HepG2 (cell line): ENCODE measurements at regions of chr22 and their contacts with region 1.

Region 1: DNA sequence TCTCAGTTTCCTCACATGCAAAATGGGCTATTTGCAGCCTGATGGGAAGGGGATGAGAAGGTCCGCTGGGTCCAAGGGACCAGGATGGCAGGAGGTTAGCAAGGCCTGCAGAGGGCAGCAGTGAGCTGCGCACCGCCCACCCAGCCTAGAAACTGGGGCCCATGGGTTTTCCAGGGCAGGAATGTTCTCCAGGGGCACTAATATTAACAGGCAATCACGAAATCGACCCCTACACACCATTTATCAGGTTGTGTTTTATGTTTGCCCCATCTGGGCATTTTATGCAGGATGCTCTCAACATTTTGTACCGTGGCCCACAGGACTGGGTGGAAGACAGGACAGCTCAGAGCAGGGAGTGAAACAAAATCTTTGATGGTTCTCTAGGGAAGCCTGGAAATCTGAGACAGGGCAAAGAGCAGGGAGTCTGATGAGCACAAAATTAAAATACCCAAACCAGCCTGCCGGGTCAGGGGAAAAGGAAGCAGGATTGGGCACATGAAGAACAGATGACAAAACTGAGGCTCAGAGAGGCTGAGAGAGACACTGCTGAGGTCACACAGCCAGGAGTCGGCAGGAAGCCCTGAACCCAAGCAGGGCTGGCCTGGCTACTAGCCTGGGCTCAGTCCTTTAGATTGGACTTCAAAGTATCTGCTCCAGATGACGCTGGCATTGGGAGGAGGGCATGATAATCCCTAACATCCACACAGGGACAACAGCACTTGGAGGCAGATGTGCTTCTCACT is 1.6 kb upstream of the BCR start:
- DNase-seq: no peak
- ATAC-seq: peak; percentile 51
- H3K4me3 ChIP-seq: peak overlapping the region in 1 of 3 experiments; percentile 83; a peak in 2 of 6 replicates
- H3K27ac ChIP-seq: peak overlapping the region; percentile 60
- H3K4me1 ChIP-seq: peaks cover 65% of the 10 kb centered on the region
- H3K27me3 ChIP-seq: no peaks in the 10 kb centered on the region; a peak in 1 of 5 replicates
- CTCF ChIP-seq: peak; percentile 97
- EP300 ChIP-seq: no peak
- POLR2A ChIP-seq: no peak
- RAD21 ChIP-seq: peak; percentile 92

Region 2: GRCh38 chr22:23110190-23110913 is 68.3 kb before region 1 on chr22:
- CTCF ChIA-PET with region 1: no interaction called
- POLR2A ChIA-PET with region 1: no interaction called
- in situ Hi-C with region 1: no loop called
- intact Hi-C with region 1: no loop called
- DNase-seq: no peak
- ATAC-seq: no peak
- H3K4me3 ChIP-seq: no peak overlapping the region
- H3K27ac ChIP-seq: no peak overlapping the region
- H3K4me1 ChIP-seq: peaks cover 10% of the 10 kb centered on the region; the same call in 1 of the 2 replicates
- H3K27me3 ChIP-seq: no peaks in the 10 kb centered on the region
- CTCF ChIP-seq: no peak
- EP300 ChIP-seq: no peak
- POLR2A ChIP-seq: no peak
- RAD21 ChIP-seq: no peak

Region 3: GRCh38 chr22:23163665-23164064 is 15.0 kb before region 1 on chr22:
- CTCF ChIA-PET with region 1: no interaction called
- POLR2A ChIA-PET with region 1: no interaction called
- in situ Hi-C with region 1: no loop called
- intact Hi-C with region 1: loop called (anchors 2 kb)
- DNase-seq: no peak
- ATAC-seq: peak; percentile 51
- H3K4me3 ChIP-seq: peak overlapping the region in 1 of 3 experiments; percentile 42; a peak in 2 of 6 replicates
- H3K27ac ChIP-seq: peak overlapping the region; percentile 11
- H3K4me1 ChIP-seq: peaks cover 86% of the 10 kb centered on the region
- H3K27me3 ChIP-seq: no peaks in the 10 kb centered on the region
- CTCF ChIP-seq: no peak
- EP300 ChIP-seq: no peak
- POLR2A ChIP-seq: no peak
- RAD21 ChIP-seq: no peak

Region 4: GRCh38 chr22:23192181-23192957 is 13.7 kb after region 1 on chr22:
- CTCF ChIA-PET with region 1: no interaction called
- POLR2A ChIA-PET with region 1: no interaction called
- in situ Hi-C with region 1: no loop called
- intact Hi-C with region 1: no loop called
- DNase-seq: no peak
- ATAC-seq: 0 out of 3 replicates have a peak, but pooled peaks have one; percentile 23
- H3K4me3 ChIP-seq: no peak overlapping the region
- H3K27ac ChIP-seq: no peak overlapping the region
- H3K4me1 ChIP-seq: no peaks in the 10 kb centered on the region
- H3K27me3 ChIP-seq: no peaks in the 10 kb centered on the region
- CTCF ChIP-seq: no peak
- EP300 ChIP-seq: no peak
- POLR2A ChIP-seq: no peak
- RAD21 ChIP-seq: no peak

Region 5: DNA sequence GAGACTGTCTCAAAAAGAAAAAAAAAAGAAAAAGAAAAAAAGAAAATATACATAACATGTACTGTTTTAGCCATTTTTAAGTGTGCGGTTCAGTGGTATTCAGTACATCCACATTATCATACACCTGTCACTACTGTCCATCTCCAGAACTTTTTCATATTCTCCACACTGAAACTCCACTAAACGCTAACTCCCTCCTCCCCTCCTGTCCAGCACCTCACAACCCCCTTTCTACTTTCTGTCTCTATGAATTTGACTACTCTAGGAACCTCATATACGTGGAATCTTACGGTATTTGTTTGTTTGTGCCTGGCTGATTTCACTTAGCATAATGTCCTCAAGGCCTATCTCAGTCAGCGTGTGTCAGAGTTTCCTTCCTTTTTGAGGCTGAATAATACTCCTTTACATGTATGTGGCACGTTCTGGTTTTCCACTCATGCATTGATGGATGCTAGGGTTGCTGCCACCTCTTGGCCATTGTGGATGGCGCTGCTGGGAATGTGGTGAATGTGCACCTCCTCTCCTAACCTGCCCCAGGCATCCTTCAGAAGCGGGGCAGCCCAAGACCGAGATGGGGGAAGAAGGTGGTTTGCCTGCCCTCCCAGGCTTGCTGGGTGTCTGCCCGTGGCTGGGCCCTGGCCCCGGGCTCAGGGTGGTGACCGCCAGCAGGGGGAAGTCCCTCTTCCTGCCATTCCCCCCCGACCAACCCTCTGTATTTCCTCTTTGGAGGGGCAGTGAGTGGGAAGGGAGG is 62.1 kb after region 1 on chr22:
- CTCF ChIA-PET with region 1: interaction called, 10 read pairs
- POLR2A ChIA-PET with region 1: no interaction called
- in situ Hi-C with region 1: no loop called
- intact Hi-C with region 1: loop called (anchors 2 kb)
- DNase-seq: no peak
- ATAC-seq: peak; percentile 62
- H3K4me3 ChIP-seq: no peak overlapping the region
- H3K27ac ChIP-seq: no peak overlapping the region
- H3K4me1 ChIP-seq: peaks cover 21% of the 10 kb centered on the region
- H3K27me3 ChIP-seq: no peaks in the 10 kb centered on the region
- CTCF ChIP-seq: peak; percentile 56
- EP300 ChIP-seq: no peak
- POLR2A ChIP-seq: no peak
- RAD21 ChIP-seq: 0 out of 2 replicates have a peak, but pooled peaks have one; percentile 14

Region 6: GRCh38 chr22:23281406-23282088 is 102.9 kb after region 1 on chr22:
- CTCF ChIA-PET with region 1: interaction called, 73 read pairs
- POLR2A ChIA-PET with region 1: interaction called, 18 read pairs
- in situ Hi-C with region 1: loop called (anchors 5 kb)
- intact Hi-C with region 1: loop called (anchors 1 kb)
- DNase-seq: peak; percentile 66
- ATAC-seq: peak; percentile 75
- H3K4me3 ChIP-seq: no peak overlapping the region
- H3K27ac ChIP-seq: no peak overlapping the region
- H3K4me1 ChIP-seq: peaks cover 38% of the 10 kb centered on the region
- H3K27me3 ChIP-seq: no peaks in the 10 kb centered on the region
- CTCF ChIP-seq: peak; percentile 98
- EP300 ChIP-seq: no peak
- POLR2A ChIP-seq: no peak
- RAD21 ChIP-seq: peak; percentile 96

Region 7: GRCh38 chr22:23385291-23386244 is 206.9 kb after region 1 on chr22:
- CTCF ChIA-PET with region 1: no interaction called
- POLR2A ChIA-PET with region 1: no interaction called
- in situ Hi-C with region 1: no loop called
- intact Hi-C with region 1: loop called (anchors 5 kb)
- DNase-seq: peak; percentile 59
- ATAC-seq: peak; percentile 85
- H3K4me3 ChIP-seq: no peak overlapping the region
- H3K27ac ChIP-seq: no peak overlapping the region
- H3K4me1 ChIP-seq: peaks cover 27% of the 10 kb centered on the region
- H3K27me3 ChIP-seq: peaks cover 8 to 29% of the 10 kb centered on the region in 2 experiments; a peak in 4 of 5 replicates
- CTCF ChIP-seq: peak; percentile 99
- EP300 ChIP-seq: no peak
- POLR2A ChIP-seq: no peak
- RAD21 ChIP-seq: peak; percentile 97